GM12878 (cell line): ENCODE measurements at regions of chr19 and their contacts with region 1.

Region 1: GRCh38 chr19:35931161-35931873 is 4.9 kb upstream of the LRFN3 start:
- DNase-seq: peak; percentile 99
- ATAC-seq: peak; percentile 99
- H3K4me3 ChIP-seq: peak overlapping the region; percentile 34
- H3K27ac ChIP-seq: peak overlapping the region; percentile 60
- H3K4me1 ChIP-seq: peaks cover 15% of the 10 kb centered on the region
- H3K27me3 ChIP-seq: no peaks in the 10 kb centered on the region
- CTCF ChIP-seq: peak; percentile 96 to 99 (median 96); a peak in 5 of 6 replicates
- EP300 ChIP-seq: no peak
- POLR2A ChIP-seq: peak; percentile 99
- RAD21 ChIP-seq: peak; percentile 100

Region 2: DNA sequence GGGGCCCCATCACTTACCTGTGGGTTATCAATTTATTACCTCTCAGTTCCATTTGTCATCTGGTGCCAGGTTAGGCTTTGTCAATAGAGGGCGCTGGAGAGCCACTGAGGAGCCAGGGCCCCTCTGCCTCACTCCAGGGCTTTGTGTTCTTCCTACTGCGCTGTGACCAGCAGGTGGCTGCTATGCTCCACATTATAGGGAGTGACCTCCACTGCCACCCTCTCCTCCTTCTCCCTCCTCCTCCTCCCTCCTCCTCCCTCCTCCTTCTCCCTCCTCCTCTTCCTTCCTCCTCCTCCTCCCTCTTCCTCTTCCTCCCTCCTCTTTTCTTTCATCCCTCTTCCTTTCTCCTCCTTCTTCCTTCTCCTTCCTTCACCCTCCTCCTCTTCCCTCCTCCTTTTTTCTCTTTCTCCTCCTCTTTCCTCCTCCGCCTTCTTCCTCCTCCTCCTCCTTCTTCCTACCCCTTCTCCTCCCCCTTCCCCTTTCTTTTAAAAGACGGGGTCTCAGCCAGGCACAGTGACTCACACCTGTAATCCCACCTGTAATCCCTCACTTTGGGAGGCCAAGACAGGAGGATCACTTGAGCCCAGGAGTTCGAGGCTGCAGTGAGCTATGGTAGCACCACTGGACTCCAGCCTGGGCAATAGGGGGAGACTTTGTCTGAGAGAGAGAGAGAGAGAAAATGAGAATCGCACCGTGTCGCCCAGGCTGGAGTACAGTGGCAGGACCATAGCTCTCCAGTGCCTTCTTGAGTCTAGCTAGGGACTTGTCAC is 237.3 kb before region 1 on chr19:
- CTCF ChIA-PET with region 1: interaction called, 29 read pairs
- POLR2A ChIA-PET with region 1: interaction called, 5 read pairs
- RAD21 ChIA-PET with region 1: interaction called, 12 read pairs
- SMC1A ChIA-PET with region 1: interaction called, 6 read pairs
- in situ Hi-C with region 1: no loop called
- intact Hi-C with region 1: loop called (anchors 1 kb)
- DNase-seq: peak; percentile 79
- ATAC-seq: peak; percentile 95
- H3K4me3 ChIP-seq: no peak overlapping the region
- H3K27ac ChIP-seq: peak overlapping the region; percentile 43; the same call in 1 of the 2 replicates
- H3K4me1 ChIP-seq: peaks cover 18% of the 10 kb centered on the region
- H3K27me3 ChIP-seq: no peaks in the 10 kb centered on the region
- CTCF ChIP-seq: peak; percentile 99
- EP300 ChIP-seq: no peak
- POLR2A ChIP-seq: no peak
- RAD21 ChIP-seq: peak; percentile 99

Region 3: DNA sequence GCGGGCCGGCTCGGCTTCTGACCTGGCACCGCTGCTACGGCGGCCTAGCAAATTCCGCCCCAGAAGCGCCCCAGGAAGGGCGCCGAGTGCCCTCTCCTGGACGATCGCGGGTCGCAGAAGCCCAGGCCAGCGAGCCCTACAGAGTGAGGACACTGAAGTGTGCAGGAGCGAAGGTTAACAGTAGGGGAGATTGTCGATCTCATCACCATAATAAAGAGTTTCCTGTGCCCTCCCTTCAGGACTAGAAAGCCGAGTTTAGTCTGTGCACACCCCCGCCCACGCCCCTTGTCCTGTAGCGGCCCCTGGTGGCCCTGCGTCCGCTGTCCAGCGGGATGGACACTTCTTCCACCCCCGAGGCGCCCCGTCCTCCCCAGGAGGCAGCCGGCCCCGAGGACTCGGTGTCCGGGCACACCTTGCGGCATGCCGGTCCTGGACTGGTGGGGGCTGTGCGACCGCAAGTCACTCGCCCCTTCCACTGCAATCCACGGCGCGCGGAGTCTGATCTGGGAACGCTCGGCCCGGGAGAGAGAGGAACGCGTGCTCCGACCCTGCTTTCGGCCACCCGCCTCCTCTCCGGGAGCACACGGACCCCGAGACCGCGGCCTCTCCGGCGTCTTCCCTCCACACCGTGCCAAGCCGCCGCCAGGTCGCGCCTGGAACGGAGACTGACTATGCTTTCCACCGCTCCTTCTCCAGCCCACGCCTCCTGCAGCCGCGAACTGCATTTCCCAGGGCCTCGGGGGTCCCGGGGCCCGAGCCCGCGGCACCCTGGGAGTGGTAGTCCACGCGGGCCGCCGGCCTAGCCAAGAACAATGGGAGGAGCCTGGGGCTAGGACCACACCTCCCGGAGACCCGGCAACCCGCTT is 214.3 kb before region 1 on chr19:
- CTCF ChIA-PET with region 1: no interaction called
- POLR2A ChIA-PET with region 1: interaction called, 11 read pairs
- RAD21 ChIA-PET with region 1: interaction called, 9 read pairs
- SMC1A ChIA-PET with region 1: interaction called, 4 read pairs
- in situ Hi-C with region 1: no loop called
- intact Hi-C with region 1: loop called (anchors 1 kb)
- DNase-seq: peak; percentile 77
- ATAC-seq: peak; percentile 75
- H3K4me3 ChIP-seq: peak overlapping the region; percentile 82
- H3K27ac ChIP-seq: peak overlapping the region; percentile 95
- H3K4me1 ChIP-seq: peaks cover 32% of the 10 kb centered on the region
- H3K27me3 ChIP-seq: no peaks in the 10 kb centered on the region
- CTCF ChIP-seq: peak; percentile 53 to 76 (median 74)
- EP300 ChIP-seq: no peak
- POLR2A ChIP-seq: peak; percentile 77
- RAD21 ChIP-seq: peak; percentile 52

Region 4: DNA sequence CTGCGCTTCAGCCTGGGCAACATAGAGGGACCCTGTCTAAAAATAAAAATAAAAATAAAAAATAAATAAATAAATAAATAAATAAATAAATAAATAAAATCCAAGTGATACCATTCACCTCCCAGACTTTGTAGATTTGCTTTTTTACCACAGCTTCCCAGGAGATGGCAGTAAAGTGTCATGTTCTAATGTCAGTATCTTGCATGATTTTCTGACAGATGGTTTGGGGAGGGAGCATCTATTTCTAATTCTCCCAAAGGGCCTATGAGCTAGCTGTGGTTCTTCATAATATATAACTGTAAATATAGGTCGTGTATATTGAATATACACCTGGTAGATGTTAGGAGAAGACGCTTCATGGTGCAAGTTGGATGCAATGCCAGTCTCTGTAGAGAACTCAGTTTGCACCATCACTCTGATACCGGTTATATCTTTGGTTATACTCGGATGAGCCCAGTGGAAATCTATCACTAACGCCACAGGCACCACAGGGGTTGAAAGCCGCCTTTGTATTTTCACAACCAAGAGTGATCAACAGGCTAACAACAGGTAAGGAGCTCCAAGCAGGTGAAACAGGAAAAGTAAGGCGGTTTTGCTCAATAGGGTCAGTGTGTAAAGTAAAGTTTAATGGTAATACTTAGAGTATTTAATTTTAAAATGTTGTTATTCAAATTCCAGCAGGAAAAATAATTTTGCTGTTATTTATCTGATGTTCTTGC is 49.0 kb before region 1 on chr19:
- CTCF ChIA-PET with region 1: interaction called, 145 read pairs
- POLR2A ChIA-PET with region 1: interaction called, 12 read pairs
- RAD21 ChIA-PET with region 1: interaction called, 107 read pairs
- SMC1A ChIA-PET with region 1: interaction called, 90 read pairs
- in situ Hi-C with region 1: loop called (anchors 5 kb)
- intact Hi-C with region 1: loop called (anchors 1 kb)
- DNase-seq: peak; percentile 33
- ATAC-seq: peak; percentile 55
- H3K4me3 ChIP-seq: no peak overlapping the region
- H3K27ac ChIP-seq: no peak overlapping the region
- H3K4me1 ChIP-seq: no peaks in the 10 kb centered on the region
- H3K27me3 ChIP-seq: no peaks in the 10 kb centered on the region
- CTCF ChIP-seq: peak; percentile 41 to 72 (median 54); a peak in 5 of 6 replicates
- EP300 ChIP-seq: no peak
- POLR2A ChIP-seq: no peak
- RAD21 ChIP-seq: peak; percentile 95

Region 5: GRCh38 chr19:35899547-35900214 is 31.6 kb before region 1 on chr19:
- CTCF ChIA-PET with region 1: interaction called, 20 read pairs
- POLR2A ChIA-PET with region 1: interaction called, 11 read pairs
- RAD21 ChIA-PET with region 1: interaction called, 37 read pairs
- SMC1A ChIA-PET with region 1: interaction called, 8 read pairs
- in situ Hi-C with region 1: no loop called
- intact Hi-C with region 1: loop called (anchors 1 kb)
- DNase-seq: peak; percentile 78
- ATAC-seq: peak; percentile 69
- H3K4me3 ChIP-seq: peak overlapping the region; percentile 96
- H3K27ac ChIP-seq: peak overlapping the region; percentile 96
- H3K4me1 ChIP-seq: peaks cover 37% of the 10 kb centered on the region
- H3K27me3 ChIP-seq: no peaks in the 10 kb centered on the region
- CTCF ChIP-seq: no peak
- EP300 ChIP-seq: peak; percentile 54 to 58; a peak in 2 of 4 replicates
- POLR2A ChIP-seq: peak; percentile 38; the same call in 1 of the 2 replicates
- RAD21 ChIP-seq: no peak

Region 6: GRCh38 chr19:35915443-35915842 is 15.9 kb before region 1 on chr19:
- CTCF ChIA-PET with region 1: interaction called, 12 read pairs
- POLR2A ChIA-PET with region 1: interaction called, 48 read pairs
- RAD21 ChIA-PET with region 1: interaction called, 21 read pairs
- SMC1A ChIA-PET with region 1: interaction called, 68 read pairs
- in situ Hi-C with region 1: no loop called
- intact Hi-C with region 1: no loop called
- DNase-seq: no peak
- ATAC-seq: peak; percentile 67
- H3K4me3 ChIP-seq: no peak overlapping the region
- H3K27ac ChIP-seq: no peak overlapping the region; the same call in 1 of the 2 replicates
- H3K4me1 ChIP-seq: peaks cover 45% of the 10 kb centered on the region
- H3K27me3 ChIP-seq: no peaks in the 10 kb centered on the region
- CTCF ChIP-seq: no peak
- EP300 ChIP-seq: no peak; a peak in 1 of 4 replicates
- POLR2A ChIP-seq: no peak
- RAD21 ChIP-seq: no peak